ENCODE measurements at regions of chr5 and their contacts with region 1.

Region 1: GRCh38 chr5:150734579-150735384 is 24.0 kb downstream of the DCTN4 start:
- DNase-seq: peak; percentile 47 to 65
- ATAC-seq: peak; percentile 55 to 74 (median 56)
- H3K4me3 ChIP-seq: no peak overlapping the region
- H3K27ac ChIP-seq: peak overlapping the region; percentile 21
- H3K4me1 ChIP-seq: peaks cover 36% of the 10 kb centered on the region
- H3K27me3 ChIP-seq: no peaks in the 10 kb centered on the region
- CTCF ChIP-seq: no peak

Region 2: GRCh38 chr5:150700594-150701293 is 34.0 kb before region 1 on chr5 and contains the start of gene RBM22:
- intact Hi-C with region 1: no loop called
- DNase-seq: peak; percentile 92 to 96
- ATAC-seq: peak; percentile 98
- H3K4me3 ChIP-seq: peak within 1 kb of the TSS; percentile 90
- H3K27ac ChIP-seq: peak within 1 kb of the TSS; percentile 97
- H3K4me1 ChIP-seq: peaks cover 13% of the 10 kb centered on the region
- H3K27me3 ChIP-seq: no peaks in the 10 kb centered on the region
- CTCF ChIP-seq: peak; percentile 64
- total RNA-seq, gene RBM22: 23.5 to 28.6 (median 27.3) TPM

Region 3: GRCh38 chr5:150753863-150754262 is 19.1 kb after region 1 on chr5:
- intact Hi-C with region 1: loop called in 1 of 2 experiments (anchors 2 kb)
- DNase-seq: no peak
- ATAC-seq: no peak
- H3K4me3 ChIP-seq: no peak overlapping the region
- H3K27ac ChIP-seq: no peak overlapping the region
- H3K4me1 ChIP-seq: peaks cover 19% of the 10 kb centered on the region
- H3K27me3 ChIP-seq: no peaks in the 10 kb centered on the region
- CTCF ChIP-seq: no peak